ENCODE measurements at regions of chr17 and their contacts with region 1.

Region 1: GRCh38 chr17:45155029-45155428 is 6.6 kb upstream of the HEXIM2 start:
- DNase-seq: peak in 1 of 10 donors; percentile 5

Region 2: GRCh38 chr17:45060797-45061605 is 94.0 kb before region 1 on chr17 and contains the start of gene NMT1:
- intact Hi-C with region 1: no loop called
- DNase-seq: peak; percentile 95 to 100 (median 98)

Region 3: DNA sequence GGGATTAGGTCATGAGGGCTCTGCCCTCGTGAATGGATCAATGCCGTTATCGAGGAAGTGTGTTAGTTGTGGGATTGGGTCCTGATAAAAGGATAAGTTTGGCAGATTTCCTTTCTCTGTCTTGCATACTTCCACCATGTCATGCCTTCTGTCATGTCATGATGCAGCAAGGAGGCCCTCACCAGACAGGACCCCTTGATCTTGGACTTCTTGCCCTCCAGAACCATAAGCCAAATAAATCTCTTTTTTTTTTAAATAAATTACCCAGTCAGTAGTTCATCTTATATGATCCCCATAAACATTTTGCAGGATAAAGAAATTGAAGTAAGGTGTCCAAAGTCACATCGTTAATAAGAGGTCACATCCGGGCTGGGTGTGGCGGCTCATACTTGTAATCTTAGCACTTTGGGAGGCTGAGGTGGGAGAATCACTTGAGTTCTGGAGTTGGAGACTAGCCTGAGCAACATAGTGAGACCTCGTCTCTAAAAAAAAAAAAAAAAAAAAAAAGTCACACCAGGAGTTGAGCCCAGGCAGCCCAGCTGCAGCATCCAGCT is 31.8 kb after region 1 on chr17:
- intact Hi-C with region 1: no loop called
- DNase-seq: peak in 1 of 10 donors; percentile 0

Region 4: DNA sequence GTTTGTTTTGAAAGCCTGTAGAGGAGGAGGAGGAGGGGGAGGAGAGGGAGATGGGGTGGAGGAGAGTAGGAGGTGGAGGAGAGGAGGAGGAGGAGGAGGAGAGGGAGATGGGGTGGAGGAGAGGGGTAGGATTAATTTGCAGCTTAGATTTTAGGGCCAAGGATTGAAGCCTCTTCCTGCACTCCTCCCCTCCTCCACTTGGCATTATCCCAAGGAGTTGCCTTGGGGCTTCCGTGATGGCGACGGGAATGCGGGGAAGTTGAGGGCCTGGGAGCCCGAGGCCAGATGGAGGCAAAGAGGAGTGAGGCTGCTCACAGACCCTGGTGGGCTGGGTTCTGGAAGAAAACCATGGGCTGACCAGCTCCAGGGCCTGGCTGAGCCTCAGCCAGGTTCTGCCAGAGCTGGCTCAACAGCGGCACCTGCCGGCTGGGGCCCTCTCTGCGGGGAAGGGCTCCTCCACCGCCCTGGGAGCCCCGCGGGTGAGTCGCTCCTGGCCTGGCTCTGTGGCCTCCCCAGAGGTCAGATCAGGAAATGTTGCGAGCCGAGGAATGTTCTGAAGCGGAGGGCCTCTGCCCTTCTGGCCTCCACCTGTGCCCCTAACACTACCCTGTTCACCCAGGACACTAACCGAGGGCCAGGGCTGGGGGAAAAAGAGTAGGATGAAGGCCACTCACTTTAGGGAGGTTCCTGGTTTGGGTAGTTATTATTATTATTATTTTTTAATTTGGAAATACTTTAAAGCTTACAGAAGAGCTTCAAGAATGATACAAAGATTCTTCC is 42.7 kb after region 1 on chr17:
- intact Hi-C with region 1: loop called (anchors 5 kb)
- DNase-seq: peak; percentile 72 to 98 (median 92)